Right cardiac atrium (tissue), 5 donors: ENCODE measurements at regions of chr6 and their contacts with region 1.

Region 1: DNA sequence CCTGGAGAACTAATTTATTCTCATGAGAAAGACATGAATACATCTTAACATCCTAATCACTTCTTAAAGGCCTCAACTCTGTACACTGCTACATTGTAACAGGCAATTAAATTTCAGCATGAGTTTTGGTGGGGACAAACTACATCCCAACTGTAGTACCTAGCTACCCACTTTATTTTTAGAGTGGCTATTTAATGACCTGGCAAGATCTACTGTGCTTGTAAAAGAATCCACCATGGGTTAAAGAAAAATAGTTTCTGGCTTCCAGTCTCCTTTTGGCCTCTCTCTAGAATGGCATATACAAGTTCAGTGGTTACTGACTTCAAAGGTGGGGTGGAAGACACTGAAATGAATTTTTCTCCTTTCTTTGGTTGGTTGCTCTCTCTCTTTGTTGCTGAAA is 193.9 kb downstream of the ESR1 start:
- DNase-seq: no peak
- ATAC-seq: no peak
- H3K4me3 ChIP-seq: no peak overlapping the region
- H3K27ac ChIP-seq: no peak overlapping the region
- H3K4me1 ChIP-seq: no peaks in the 10 kb centered on the region
- H3K27me3 ChIP-seq: no peaks in the 10 kb centered on the region

Region 2: DNA sequence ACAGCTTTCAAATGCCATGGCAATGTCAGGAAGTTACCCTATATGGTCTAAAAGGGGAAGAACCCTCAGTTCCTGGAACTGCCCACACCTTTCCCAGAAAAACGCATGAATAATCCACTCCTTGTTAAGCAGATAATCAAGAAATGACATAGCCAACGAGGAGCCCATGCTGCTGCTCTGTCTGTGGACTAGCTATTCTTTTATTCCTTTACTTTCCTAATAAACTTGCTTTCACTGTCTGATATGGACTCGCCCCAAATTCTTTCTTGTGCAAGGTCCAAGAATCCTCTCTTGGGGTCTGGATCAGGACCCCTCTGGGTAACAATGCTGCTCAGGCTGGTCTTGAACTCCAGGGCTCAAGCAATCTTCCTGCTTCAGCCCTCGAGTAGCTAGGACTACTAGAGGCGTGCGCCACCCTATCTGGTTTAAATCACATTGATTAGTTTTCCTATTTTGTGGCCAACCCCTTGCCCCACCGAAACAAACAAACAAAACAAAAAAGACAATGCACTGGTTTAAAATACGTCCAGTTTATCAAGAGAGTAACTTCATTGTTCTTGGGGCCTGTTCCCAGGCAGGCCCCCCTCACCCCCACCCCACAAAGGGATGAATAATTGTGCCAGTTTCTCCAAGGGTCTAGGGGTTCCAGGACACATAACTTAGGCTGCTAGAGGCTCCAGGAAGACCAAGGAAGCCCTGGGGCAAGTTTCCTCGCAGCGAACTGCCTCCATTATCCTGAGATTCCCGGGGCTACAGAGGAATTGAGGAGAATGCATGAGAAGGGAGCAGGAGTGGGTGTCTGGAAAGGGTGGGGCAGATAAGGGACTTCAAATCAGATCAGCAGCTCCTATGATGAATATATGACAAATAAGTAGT is 771.8 kb before region 1 on chr6:
- intact Hi-C with region 1: no loop called
- DNase-seq: no peak
- ATAC-seq: no peak
- H3K4me3 ChIP-seq: no peak overlapping the region
- H3K27ac ChIP-seq: no peak overlapping the region
- H3K4me1 ChIP-seq: no peaks in the 10 kb centered on the region
- H3K27me3 ChIP-seq: no peaks in the 10 kb centered on the region

Region 3: GRCh38 chr6:152018876-152019275 is 17.5 kb after region 1 on chr6:
- intact Hi-C with region 1: loop called in 1 of 4 experiments (anchors 2 kb)
- DNase-seq: no peak
- ATAC-seq: no peak
- H3K4me3 ChIP-seq: no peak overlapping the region
- H3K27ac ChIP-seq: no peak overlapping the region
- H3K4me1 ChIP-seq: no peaks in the 10 kb centered on the region
- H3K27me3 ChIP-seq: no peaks in the 10 kb centered on the region